ENCODE measurements at regions of chr12 and their contacts with region 1.

Region 1: DNA sequence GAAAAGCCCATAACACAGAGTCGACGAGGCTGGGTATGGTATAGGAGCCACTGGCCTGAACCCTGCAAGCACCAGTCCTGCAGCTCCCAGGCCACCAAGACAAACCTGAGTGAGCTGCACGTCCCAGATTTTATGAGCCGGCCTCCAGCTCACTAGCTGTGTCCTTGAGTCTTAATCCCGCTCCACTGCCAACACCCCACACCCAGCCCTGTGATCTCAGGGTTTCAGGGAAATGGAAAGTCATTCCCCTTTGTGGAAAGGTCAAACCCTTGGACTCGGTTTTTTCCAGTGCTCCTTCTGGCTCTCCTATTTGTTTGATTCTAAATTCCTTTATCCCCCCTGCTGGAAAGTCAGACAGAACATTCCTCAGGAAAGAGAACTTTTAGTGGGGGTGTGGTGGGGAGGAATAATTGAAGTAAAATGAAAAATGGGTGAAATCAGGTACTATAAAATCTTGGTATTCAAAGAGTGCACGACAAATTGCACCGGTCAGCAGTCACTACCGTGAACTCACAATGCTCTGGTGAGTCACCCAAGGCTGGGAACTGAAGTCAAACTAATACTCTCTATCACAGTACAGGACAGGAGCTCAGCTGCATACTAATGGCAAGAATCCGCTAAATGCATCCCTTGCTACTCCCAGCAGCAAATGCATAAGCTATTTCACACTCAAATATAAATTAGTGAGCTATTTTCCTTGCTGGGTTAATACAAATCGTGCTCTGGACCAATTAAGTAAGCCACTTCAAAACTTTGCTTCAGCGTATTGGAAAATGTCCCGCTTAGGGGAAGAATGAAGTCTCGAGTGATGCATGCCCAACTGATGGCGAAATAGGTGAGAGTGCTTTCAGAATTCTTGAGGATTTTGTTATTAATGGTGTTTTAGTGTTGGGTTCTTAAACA is 9.0 kb downstream of the PITPNM2 start:
- DNase-seq: peak; percentile 72
- H3K4me3 ChIP-seq: peak overlapping the region in 1 of 3 experiments; percentile 6
- H3K27ac ChIP-seq: peak overlapping the region; percentile 34
- H3K4me1 ChIP-seq: peaks cover 29% of the 10 kb centered on the region
- H3K27me3 ChIP-seq: no peaks in the 10 kb centered on the region
- CTCF ChIP-seq: no peak
- POLR2A ChIP-seq: no peak

Region 2: GRCh38 chr12:122995503-122996187 is 146.2 kb before region 1 on chr12:
- CTCF ChIA-PET with region 1: no interaction called
- POLR2A ChIA-PET with region 1: no interaction called
- dilution Hi-C with region 1: no loop called
- intact Hi-C with region 1: no loop called
- DNase-seq: no peak
- H3K4me3 ChIP-seq: no peak overlapping the region
- H3K27ac ChIP-seq: no peak overlapping the region
- H3K4me1 ChIP-seq: no peaks in the 10 kb centered on the region
- H3K27me3 ChIP-seq: no peaks in the 10 kb centered on the region
- CTCF ChIP-seq: no peak
- POLR2A ChIP-seq: no peak

Region 3: GRCh38 chr12:123085730-123086487 is 56.0 kb before region 1 on chr12:
- CTCF ChIA-PET with region 1: interaction called, 3 read pairs
- POLR2A ChIA-PET with region 1: no interaction called
- dilution Hi-C with region 1: no loop called
- intact Hi-C with region 1: loop called (anchors 5 kb)
- DNase-seq: peak; percentile 80
- H3K4me3 ChIP-seq: no peak overlapping the region
- H3K27ac ChIP-seq: no peak overlapping the region
- H3K4me1 ChIP-seq: peaks cover 35% of the 10 kb centered on the region
- H3K27me3 ChIP-seq: no peaks in the 10 kb centered on the region
- CTCF ChIP-seq: peak in 1 of 2 donors; percentile 10
- POLR2A ChIP-seq: no peak

Region 4: GRCh38 chr12:123365025-123365917 is 223.4 kb after region 1 on chr12:
- CTCF ChIA-PET with region 1: no interaction called
- POLR2A ChIA-PET with region 1: no interaction called
- dilution Hi-C with region 1: no loop called
- intact Hi-C with region 1: no loop called
- DNase-seq: peak; percentile 99
- H3K4me3 ChIP-seq: peak overlapping the region; percentile 47 to 93 (median 79)
- H3K27ac ChIP-seq: peak overlapping the region; percentile 75
- H3K4me1 ChIP-seq: peaks cover 13% of the 10 kb centered on the region
- H3K27me3 ChIP-seq: no peaks in the 10 kb centered on the region
- CTCF ChIP-seq: peak; percentile 78 to 82
- POLR2A ChIP-seq: peak; percentile 85

Region 5: DNA sequence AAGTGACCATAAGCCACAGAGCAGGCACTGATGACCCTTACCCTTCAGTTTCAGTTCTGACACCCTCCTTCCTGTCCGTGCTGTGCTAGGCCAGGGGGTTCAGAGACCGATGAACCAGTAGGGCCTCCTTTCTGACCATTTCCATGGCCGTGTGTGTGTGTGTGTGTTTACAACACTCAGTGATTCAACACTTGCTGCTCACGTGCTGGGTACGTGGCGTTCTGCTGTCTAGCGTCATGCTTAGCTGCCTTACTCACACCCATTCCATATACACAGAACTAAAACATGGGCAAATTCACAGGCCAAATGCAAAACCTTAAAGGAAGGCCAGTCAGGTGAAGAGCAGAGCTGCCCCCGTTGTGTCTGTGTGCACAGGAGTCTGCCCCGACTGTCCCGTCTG is 687.7 kb after region 1 on chr12:
- CTCF ChIA-PET with region 1: no interaction called
- POLR2A ChIA-PET with region 1: no interaction called
- dilution Hi-C with region 1: no loop called
- intact Hi-C with region 1: no loop called
- DNase-seq: no peak
- H3K4me3 ChIP-seq: no peak overlapping the region
- H3K27ac ChIP-seq: no peak overlapping the region
- H3K4me1 ChIP-seq: no peaks in the 10 kb centered on the region
- H3K27me3 ChIP-seq: no peaks in the 10 kb centered on the region
- CTCF ChIP-seq: no peak
- POLR2A ChIP-seq: no peak